Thyroid gland (tissue), 4 donors: ENCODE measurements at regions of chr11 and their contacts with region 1.

Region 1: GRCh38 chr11:43419460-43419859 is 60.7 kb downstream of the TTC17 start:
- DNase-seq: peak; percentile 18 to 35
- H3K4me3 ChIP-seq: no peak overlapping the region
- H3K27ac ChIP-seq: no peak overlapping the region
- H3K4me1 ChIP-seq: no peaks in the 10 kb centered on the region
- H3K27me3 ChIP-seq: no peaks in the 10 kb centered on the region
- CTCF ChIP-seq: peak in 5 of 6 experiments; percentile 45 to 69 (median 69)
- POLR2A ChIP-seq: no peak

Region 2: GRCh38 chr11:43101113-43101512 is 318.3 kb before region 1 on chr11:
- intact Hi-C with region 1: no loop called
- DNase-seq: no peak
- H3K4me3 ChIP-seq: no peak overlapping the region
- H3K27ac ChIP-seq: no peak overlapping the region
- H3K4me1 ChIP-seq: no peaks in the 10 kb centered on the region
- H3K27me3 ChIP-seq: no peaks in the 10 kb centered on the region
- CTCF ChIP-seq: no peak
- POLR2A ChIP-seq: no peak

Region 3: GRCh38 chr11:43311791-43312607 is 107.5 kb before region 1 on chr11 and contains the start of gene API5:
- intact Hi-C with region 1: loop called (anchors 10 kb)
- DNase-seq: peak; percentile 88 to 93
- H3K4me3 ChIP-seq: peak within 1 kb of the TSS; percentile 32 to 70 (median 37)
- H3K27ac ChIP-seq: peak within 1 kb of the TSS; percentile 10 to 74 (median 67)
- H3K4me1 ChIP-seq: peaks cover 14 to 20% of the 10 kb centered on the region in 2 donors
- H3K27me3 ChIP-seq: no peaks in the 10 kb centered on the region
- CTCF ChIP-seq: peak; percentile 29 to 94 (median 73)
- POLR2A ChIP-seq: peak in 1 of 2 donors; percentile 74
- total RNA-seq, gene API5: 83.2 to 257 (median 143) TPM

Region 4: GRCh38 chr11:43579171-43579918 is 159.9 kb after region 1 on chr11:
- intact Hi-C with region 1: no loop called
- DNase-seq: no peak
- H3K4me3 ChIP-seq: peak overlapping the region in 2 of 3 donors; percentile 17 to 27
- H3K27ac ChIP-seq: no peak overlapping the region
- H3K4me1 ChIP-seq: peaks cover 39 to 61% of the 10 kb centered on the region in 2 donors
- H3K27me3 ChIP-seq: peaks cover 61% of the 10 kb centered on the region
- CTCF ChIP-seq: peak in 1 of 6 experiments; percentile 21
- POLR2A ChIP-seq: no peak

Region 5: DNA sequence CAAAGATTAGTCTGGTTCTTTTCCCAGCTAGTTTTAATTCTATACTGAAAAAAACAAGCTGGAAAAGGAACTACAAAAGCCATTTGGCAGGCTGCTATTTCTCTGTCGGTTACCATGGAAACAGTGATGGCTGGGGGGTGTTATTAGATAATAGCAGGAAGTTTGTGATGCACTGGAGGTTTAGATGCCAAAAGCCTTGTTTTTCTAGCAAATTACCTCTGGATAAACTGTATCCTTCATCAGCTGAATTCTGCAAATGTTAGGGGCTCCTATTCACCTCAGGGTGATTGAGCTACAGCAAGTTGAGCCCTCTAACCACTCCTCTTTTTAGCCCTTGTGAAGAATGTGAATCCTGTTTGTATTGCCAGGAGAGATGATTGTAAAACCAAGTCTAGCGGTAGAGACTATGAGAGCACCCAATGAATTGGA is 486.4 kb after region 1 on chr11:
- intact Hi-C with region 1: no loop called
- DNase-seq: no peak
- H3K4me3 ChIP-seq: no peak overlapping the region
- H3K27ac ChIP-seq: peak overlapping the region in 1 of 3 donors; percentile 24
- H3K4me1 ChIP-seq: peaks cover 0 to 8% of the 10 kb centered on the region in 2 donors
- H3K27me3 ChIP-seq: no peaks in the 10 kb centered on the region
- CTCF ChIP-seq: no peak
- POLR2A ChIP-seq: no peak